Heart right ventricle (tissue), 16 donors: ENCODE measurements at regions of chr10 and their contacts with region 1.

Region 1: GRCh38 chr10:133438711-133439273 is 14.4 kb upstream of the SPRN start:
- DNase-seq: no peak
- ATAC-seq: no peak
- H3K4me3 ChIP-seq: no peak overlapping the region
- H3K27ac ChIP-seq: no peak overlapping the region
- H3K4me1 ChIP-seq: no peaks in the 10 kb centered on the region
- H3K27me3 ChIP-seq: no peaks in the 10 kb centered on the region
- CTCF ChIP-seq: peak in 1 of 9 donors; percentile 37

Region 2: GRCh38 chr10:133453516-133454203 is 14.9 kb after region 1 on chr10 and contains the start of gene SCART1:
- intact Hi-C with region 1: no loop called
- DNase-seq: no peak
- ATAC-seq: peak in 1 of 8 donors; percentile 26
- H3K4me3 ChIP-seq: no peak within 1 kb of the TSS
- H3K27ac ChIP-seq: no peak within 1 kb of the TSS
- H3K4me1 ChIP-seq: no peaks in the 10 kb centered on the region
- H3K27me3 ChIP-seq: no peaks in the 10 kb centered on the region
- CTCF ChIP-seq: no peak
- total RNA-seq, gene SCART1: 0.15 to 1.5 (median 0.58) TPM

Region 3: DNA sequence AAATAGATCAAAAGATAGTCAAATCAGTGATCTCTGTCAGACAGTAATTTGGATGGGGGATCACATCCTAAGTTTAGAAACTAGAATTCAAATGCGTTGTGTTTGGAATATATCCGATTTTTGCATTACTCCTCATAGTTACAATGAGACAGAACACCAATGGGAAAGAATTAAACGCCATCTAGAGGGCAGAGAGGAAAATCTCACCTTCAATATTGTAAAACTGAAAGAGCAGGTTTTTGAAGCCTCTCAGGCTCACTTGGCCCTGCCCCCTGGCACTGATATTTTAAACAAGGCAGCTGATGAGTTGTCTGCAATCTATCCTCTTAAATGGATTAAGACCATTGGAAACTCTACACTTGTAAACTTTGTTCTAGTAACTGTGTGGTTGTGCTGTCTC is 170.1 kb after region 1 on chr10:
- intact Hi-C with region 1: loop called in 1 of 10 experiments (anchors 5 kb)
- DNase-seq: no peak
- ATAC-seq: peak in 1 of 8 donors; percentile 33
- H3K4me3 ChIP-seq: no peak overlapping the region
- H3K27ac ChIP-seq: no peak overlapping the region
- H3K4me1 ChIP-seq: no peaks in the 10 kb centered on the region
- H3K27me3 ChIP-seq: peaks cover 0 to 79% (median 47%) of the 10 kb centered on the region in 7 donors
- CTCF ChIP-seq: peak; percentile 7 to 63 (median 56)